Activated T-helper 1 cell treated with anti-CD3 and anti-CD28 coated beads, Interleukin-12 subunit alpha, Interleukin-12 subunit beta, Interleukin-2, Interleukin-4 antibody, amounts not matched to agents 30 ng/mL and 10 ng/mL and 1 ng/mL, durations not matched to agents 14 hours and 24 hours and 36 hours (primary cell): ENCODE measurements at regions of chr3 and their contacts with region 1.

Region 1: DNA sequence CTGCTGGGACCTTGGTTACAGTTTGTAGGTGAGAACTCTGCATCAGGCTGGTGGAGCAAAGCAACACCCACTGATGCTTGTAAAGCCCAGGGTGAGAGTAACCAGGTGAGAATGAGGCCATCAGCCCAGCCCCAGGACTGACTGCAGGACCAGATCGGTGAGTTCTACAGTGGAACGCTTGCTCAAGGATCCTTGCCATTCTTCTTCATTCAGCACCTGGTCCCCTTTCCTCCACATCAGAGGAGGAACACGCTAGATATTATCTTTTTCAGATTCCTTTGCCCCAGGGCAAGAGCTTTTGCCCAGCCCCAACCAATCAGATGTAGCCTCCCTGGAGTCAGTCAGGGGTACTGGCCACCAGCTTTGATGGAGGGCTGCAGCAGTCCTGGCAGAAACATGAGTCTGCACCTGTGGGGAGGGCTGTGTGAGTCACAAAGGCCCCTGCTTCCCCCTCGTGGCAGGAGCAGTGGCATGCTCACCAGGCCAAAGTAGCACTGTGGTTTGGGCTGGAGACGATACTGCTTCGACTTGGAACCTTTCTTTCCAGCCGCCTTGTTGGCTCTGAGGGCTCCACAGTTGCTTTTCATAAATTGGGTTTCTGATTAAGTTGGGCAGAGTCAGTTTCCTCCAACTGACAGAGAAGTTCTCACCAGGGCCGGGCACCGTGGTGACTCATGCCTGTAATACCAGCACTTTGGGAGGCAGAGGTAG is 3.5 kb upstream of the SHISA5 start:
- DNase-seq: peak; percentile 51
- H3K4me3 Mint-ChIP-seq: peak overlapping the region; percentile 58
- H3K27ac Mint-ChIP-seq: peak overlapping the region; percentile 55
- H3K4me1 Mint-ChIP-seq: peaks cover 39% of the 10 kb centered on the region
- H3K27me3 Mint-ChIP-seq: peaks cover 3% of the 10 kb centered on the region

Region 2: DNA sequence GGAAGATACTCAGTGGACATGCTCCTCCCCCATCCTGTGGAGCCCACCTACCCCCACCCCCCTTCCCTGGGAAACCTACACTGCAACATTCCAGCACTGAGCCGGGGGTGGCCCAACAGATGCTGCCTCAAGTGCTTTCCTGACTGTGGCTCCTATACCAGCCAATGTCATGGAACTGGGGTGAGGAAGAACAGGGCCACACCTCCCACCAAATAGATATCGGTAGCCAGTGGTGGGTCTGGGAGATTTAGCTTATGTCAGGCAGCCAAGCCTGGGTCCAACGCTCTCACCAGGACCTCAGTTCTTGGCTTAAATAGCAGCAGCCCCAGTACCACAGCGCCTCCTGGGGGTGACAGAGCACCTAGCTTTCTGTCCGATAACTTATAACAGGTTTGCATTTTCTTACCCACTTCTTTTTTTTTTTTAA is 349.5 kb before region 1 on chr3:
- intact Hi-C with region 1: no loop called
- DNase-seq: peak; percentile 28
- H3K4me3 Mint-ChIP-seq: no peak overlapping the region
- H3K27ac Mint-ChIP-seq: no peak overlapping the region
- H3K4me1 Mint-ChIP-seq: no peaks in the 10 kb centered on the region
- H3K27me3 Mint-ChIP-seq: no peaks in the 10 kb centered on the region

Region 3: GRCh38 chr3:48446425-48447193 is 60.9 kb before region 1 on chr3 and contains the start of gene ATRIP:
- intact Hi-C with region 1: loop called (anchors 1 kb)
- DNase-seq: peak; percentile 88
- H3K4me3 Mint-ChIP-seq: peak within 1 kb of the TSS; percentile 90
- H3K27ac Mint-ChIP-seq: peak within 1 kb of the TSS; percentile 62
- H3K4me1 Mint-ChIP-seq: peaks cover 39% of the 10 kb centered on the region
- H3K27me3 Mint-ChIP-seq: no peaks in the 10 kb centered on the region
- total RNA-seq, gene ATRIP: 16.5 and 20.5 TPM in 2 replicates

Region 4: GRCh38 chr3:48465531-48466378 is 41.8 kb before region 1 on chr3:
- intact Hi-C with region 1: loop called (anchors 1 kb)
- DNase-seq: peak; percentile 82
- H3K4me3 Mint-ChIP-seq: peak overlapping the region; percentile 93
- H3K27ac Mint-ChIP-seq: peak overlapping the region; percentile 98
- H3K4me1 Mint-ChIP-seq: peaks cover 44% of the 10 kb centered on the region
- H3K27me3 Mint-ChIP-seq: no peaks in the 10 kb centered on the region

Region 5: GRCh38 chr3:48472915-48473616 is 34.4 kb before region 1 on chr3:
- intact Hi-C with region 1: loop called (anchors 1 kb)
- DNase-seq: peak; percentile 94
- H3K4me3 Mint-ChIP-seq: peak overlapping the region; percentile 82
- H3K27ac Mint-ChIP-seq: peak overlapping the region; percentile 95
- H3K4me1 Mint-ChIP-seq: peaks cover 64% of the 10 kb centered on the region
- H3K27me3 Mint-ChIP-seq: no peaks in the 10 kb centered on the region

Region 6: GRCh38 chr3:48478596-48479555 is 28.6 kb before region 1 on chr3:
- intact Hi-C with region 1: loop called (anchors 1 kb)
- DNase-seq: peak; percentile 50
- H3K4me3 Mint-ChIP-seq: peak overlapping the region; percentile 78
- H3K27ac Mint-ChIP-seq: peak overlapping the region; percentile 92
- H3K4me1 Mint-ChIP-seq: peaks cover 46% of the 10 kb centered on the region
- H3K27me3 Mint-ChIP-seq: no peaks in the 10 kb centered on the region

Region 7: DNA sequence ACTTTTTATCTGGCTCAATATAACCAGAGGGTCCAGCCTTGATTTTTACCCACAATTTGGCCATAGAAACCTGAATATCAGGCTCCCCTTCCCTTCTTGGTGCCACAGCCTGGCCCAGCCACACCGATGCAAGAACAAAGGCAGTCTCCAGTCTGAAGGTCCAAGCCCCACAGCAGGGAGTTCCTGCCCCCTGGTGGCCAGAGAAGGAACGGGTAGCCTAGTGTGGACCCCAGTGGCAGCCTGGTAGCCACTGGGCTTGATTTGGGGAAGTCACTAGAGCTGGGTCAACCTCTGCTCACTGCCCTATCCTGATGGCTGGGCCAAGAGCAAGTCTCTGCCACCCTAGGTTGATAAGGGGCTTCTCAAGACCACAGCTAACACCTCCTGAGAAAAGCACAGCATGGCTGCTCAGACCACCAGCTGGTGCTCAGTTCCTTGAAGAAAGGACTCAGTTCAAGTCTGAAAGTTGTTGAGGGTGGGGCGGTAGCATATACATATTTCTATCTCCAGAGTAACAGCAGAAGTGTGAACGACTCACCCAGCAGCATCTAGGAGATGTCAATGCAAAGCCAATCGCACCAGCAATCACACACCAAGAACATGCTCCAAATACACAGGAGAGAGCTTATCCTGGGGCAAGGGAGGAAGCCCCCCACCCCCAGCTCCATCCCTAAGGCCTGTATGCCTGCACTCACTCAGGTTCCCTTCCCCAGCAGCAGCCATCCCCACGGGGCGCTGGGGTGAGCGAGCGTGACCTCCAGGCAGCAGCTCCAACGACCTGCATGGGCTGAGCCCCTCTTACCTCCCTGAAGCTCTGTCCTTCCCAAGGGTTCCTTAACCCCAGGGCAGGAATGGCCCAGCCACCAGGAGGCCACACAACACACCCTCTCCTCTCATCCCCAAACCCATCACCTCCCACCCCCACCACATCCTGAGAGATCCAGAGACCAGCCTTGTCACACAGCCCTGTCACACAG is 41.5 kb after region 1 on chr3:
- intact Hi-C with region 1: loop called (anchors 2 kb)
- DNase-seq: peak; percentile 73
- H3K4me3 Mint-ChIP-seq: no peak overlapping the region
- H3K27ac Mint-ChIP-seq: no peak overlapping the region
- H3K4me1 Mint-ChIP-seq: peaks cover 32% of the 10 kb centered on the region
- H3K27me3 Mint-ChIP-seq: no peaks in the 10 kb centered on the region